ENCODE measurements at regions of chr10 and their contacts with region 1.

Region 1: GRCh38 chr10:69639291-69640195 is 9.5 kb downstream of the FAM241B start:
- DNase-seq: peak; percentile 63 to 82 (median 68)
- ATAC-seq: peak; percentile 89
- H3K4me3 ChIP-seq: no peak overlapping the region
- H3K27ac ChIP-seq: no peak overlapping the region
- H3K4me1 ChIP-seq: peaks cover 0 to 3% of the 10 kb centered on the region in 2 experiments; a peak in 1 of 5 replicates
- H3K27me3 ChIP-seq: peaks cover 0 to 69% of the 10 kb centered on the region in 2 experiments; a peak in 2 of 5 replicates
- CTCF ChIP-seq: peak; percentile 88 to 95 (median 94)
- EP300 ChIP-seq: no peak
- POLR2A ChIP-seq: no peak
- RAD21 ChIP-seq: peak; percentile 91 to 95

Region 2: GRCh38 chr10:69237528-69238159 is 401.9 kb before region 1 on chr10:
- CTCF ChIA-PET with region 1: interaction called, 4 read pairs
- POLR2A ChIA-PET with region 1: no interaction called
- in situ Hi-C with region 1: loop called (anchors 25 kb)
- intact Hi-C with region 1: loop called (anchors 10 kb)
- DNase-seq: peak; percentile 89 to 94 (median 92)
- ATAC-seq: peak; percentile 97
- H3K4me3 ChIP-seq: no peak overlapping the region
- H3K27ac ChIP-seq: no peak overlapping the region
- H3K4me1 ChIP-seq: peaks cover 13% of the 10 kb centered on the region in 2 experiments; a peak in 4 of 5 replicates
- H3K27me3 ChIP-seq: no peaks in the 10 kb centered on the region
- CTCF ChIP-seq: peak; percentile 94 to 99 (median 97)
- EP300 ChIP-seq: no peak
- POLR2A ChIP-seq: no peak
- RAD21 ChIP-seq: peak; percentile 99 to 100

Region 3: DNA sequence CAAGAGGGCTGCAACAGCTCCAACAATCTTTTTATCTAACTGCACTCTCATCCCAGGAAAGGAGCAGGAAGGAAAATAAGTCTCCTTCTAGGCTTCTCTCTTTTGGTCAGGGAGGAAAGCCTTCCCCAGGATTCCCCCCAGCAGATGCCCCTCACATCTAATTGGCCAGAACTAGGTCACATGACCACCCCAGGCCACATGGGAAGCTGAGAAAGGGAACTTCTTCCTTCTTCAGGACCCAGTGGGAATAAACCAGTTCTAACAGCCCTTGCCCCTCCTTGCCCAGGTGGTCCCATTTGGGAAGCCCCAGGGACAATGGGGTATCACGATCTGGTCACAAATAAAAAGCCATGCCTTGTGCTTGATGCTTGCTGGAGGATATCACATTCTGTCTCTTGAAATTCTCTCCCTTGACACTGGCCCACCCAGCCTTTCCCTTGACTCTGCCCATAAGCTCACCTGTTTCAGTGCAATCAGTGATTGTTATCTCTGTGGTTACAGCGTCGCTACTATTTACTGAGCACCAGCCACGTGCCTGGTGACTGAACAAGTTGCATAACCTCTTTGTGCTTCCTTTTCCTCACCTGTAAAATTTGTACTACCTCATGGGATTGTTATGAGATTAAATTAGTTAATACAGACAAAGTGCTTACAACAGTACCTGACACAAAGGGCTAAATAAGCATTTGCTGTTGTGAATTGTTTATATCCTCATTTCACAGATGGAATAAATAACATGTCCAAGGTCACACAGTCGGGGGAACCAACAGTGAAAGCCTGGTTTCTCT is 213.8 kb before region 1 on chr10:
- CTCF ChIA-PET with region 1: no interaction called
- POLR2A ChIA-PET with region 1: no interaction called
- in situ Hi-C with region 1: loop called (anchors 5 kb)
- intact Hi-C with region 1: loop called (anchors 5 kb)
- DNase-seq: peak in 1 of 4 experiments; percentile 54
- ATAC-seq: no peak
- H3K4me3 ChIP-seq: no peak overlapping the region
- H3K27ac ChIP-seq: no peak overlapping the region
- H3K4me1 ChIP-seq: peaks cover 6 to 15% of the 10 kb centered on the region in 2 experiments; a peak in 3 of 5 replicates
- H3K27me3 ChIP-seq: peaks cover 5 to 20% of the 10 kb centered on the region in 2 experiments; a peak in 2 of 5 replicates
- CTCF ChIP-seq: no peak
- EP300 ChIP-seq: no peak
- POLR2A ChIP-seq: no peak
- RAD21 ChIP-seq: no peak

Region 4: GRCh38 chr10:69434169-69434568 is 205.4 kb before region 1 on chr10:
- CTCF ChIA-PET with region 1: no interaction called
- POLR2A ChIA-PET with region 1: no interaction called
- in situ Hi-C with region 1: loop called (anchors 5 kb)
- intact Hi-C with region 1: loop called (anchors 5 kb)
- DNase-seq: no peak
- ATAC-seq: no peak
- H3K4me3 ChIP-seq: no peak overlapping the region
- H3K27ac ChIP-seq: no peak overlapping the region
- H3K4me1 ChIP-seq: peaks cover 0 to 7% of the 10 kb centered on the region in 2 experiments; a peak in 1 of 5 replicates
- H3K27me3 ChIP-seq: peaks cover 23 to 43% of the 10 kb centered on the region in 2 experiments
- CTCF ChIP-seq: no peak
- EP300 ChIP-seq: no peak
- POLR2A ChIP-seq: no peak
- RAD21 ChIP-seq: no peak

Region 5: GRCh38 chr10:69515699-69516259 is 123.8 kb before region 1 on chr10:
- CTCF ChIA-PET with region 1: interaction called, 80 read pairs
- POLR2A ChIA-PET with region 1: interaction called, 6 read pairs
- in situ Hi-C with region 1: loop called (anchors 5 kb)
- intact Hi-C with region 1: loop called (anchors 1 kb)
- DNase-seq: peak; percentile 82 to 87 (median 86)
- ATAC-seq: peak; percentile 99
- H3K4me3 ChIP-seq: no peak overlapping the region
- H3K27ac ChIP-seq: no peak overlapping the region
- H3K4me1 ChIP-seq: no peaks in the 10 kb centered on the region
- H3K27me3 ChIP-seq: peaks cover 0 to 28% of the 10 kb centered on the region in 2 experiments; a peak in 4 of 5 replicates
- CTCF ChIP-seq: peak; percentile 94 to 97 (median 95)
- EP300 ChIP-seq: no peak
- POLR2A ChIP-seq: no peak
- RAD21 ChIP-seq: peak; percentile 88 to 96

Region 6: GRCh38 chr10:69800109-69800508 is 160.6 kb after region 1 on chr10:
- CTCF ChIA-PET with region 1: interaction called, 14 read pairs
- POLR2A ChIA-PET with region 1: no interaction called
- in situ Hi-C with region 1: no loop called
- intact Hi-C with region 1: loop called (anchors 5 kb)
- DNase-seq: peak; percentile 48 to 69 (median 61)
- ATAC-seq: peak; percentile 87
- H3K4me3 ChIP-seq: no peak overlapping the region
- H3K27ac ChIP-seq: no peak overlapping the region
- H3K4me1 ChIP-seq: peaks cover 0 to 13% of the 10 kb centered on the region in 2 experiments; a peak in 1 of 5 replicates
- H3K27me3 ChIP-seq: peaks cover 17 to 59% of the 10 kb centered on the region in 2 experiments; a peak in 4 of 5 replicates
- CTCF ChIP-seq: peak; percentile 63 to 79 (median 75)
- EP300 ChIP-seq: no peak
- POLR2A ChIP-seq: no peak
- RAD21 ChIP-seq: peak; percentile 57 to 67

Measured in K562 (cell line).